ENCODE measurements at regions of chrX and their contacts with region 1.

Region 1: DNA sequence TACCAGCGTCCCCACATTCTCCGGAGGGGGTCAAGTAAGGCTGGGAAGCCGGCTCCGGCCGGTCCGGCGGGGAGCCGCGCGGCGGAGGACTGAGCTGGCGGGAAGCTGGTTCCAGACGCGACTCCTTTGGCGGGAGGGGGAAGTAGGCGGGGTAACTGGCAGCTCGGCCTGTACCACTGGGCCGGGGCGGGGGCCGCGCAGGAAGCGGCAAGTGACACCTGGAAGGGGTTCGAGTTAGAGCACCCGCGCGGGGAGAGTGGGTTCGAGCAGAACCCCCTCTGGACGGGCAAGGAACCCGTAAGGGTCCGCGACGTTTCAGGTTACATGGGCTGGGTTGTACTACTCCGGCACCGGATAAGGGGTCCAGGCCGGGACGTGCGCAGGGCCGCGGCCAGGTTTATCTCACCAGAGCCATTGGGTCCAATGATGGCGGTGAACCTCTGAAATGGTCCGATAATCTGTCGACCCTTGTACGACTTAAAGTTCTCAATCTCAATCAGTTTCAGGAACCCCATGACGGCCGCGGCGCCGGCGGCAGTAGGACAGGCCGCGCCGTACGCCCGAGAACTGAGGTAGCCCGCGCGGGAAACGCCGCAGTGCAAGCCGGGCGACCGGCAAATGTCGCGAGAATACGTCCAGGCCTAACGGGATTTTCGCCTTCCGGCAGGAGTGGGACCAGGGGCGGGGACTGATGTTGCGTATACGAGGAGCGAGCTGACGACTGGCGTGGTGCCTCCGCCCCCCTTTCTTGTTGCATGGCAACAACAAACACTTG is at the start of gene SMC1A:
- DNase-seq: peak; percentile 98
- H3K4me3 Mint-ChIP-seq: peak within 1 kb of the TSS; percentile 98
- H3K27ac Mint-ChIP-seq: peak within 1 kb of the TSS; percentile 98
- H3K4me1 Mint-ChIP-seq: peaks cover 24% of the 10 kb centered on the region
- H3K27me3 Mint-ChIP-seq: no peaks in the 10 kb centered on the region
- total RNA-seq, gene SMC1A: 141 and 144 TPM in 2 replicates

Region 2: DNA sequence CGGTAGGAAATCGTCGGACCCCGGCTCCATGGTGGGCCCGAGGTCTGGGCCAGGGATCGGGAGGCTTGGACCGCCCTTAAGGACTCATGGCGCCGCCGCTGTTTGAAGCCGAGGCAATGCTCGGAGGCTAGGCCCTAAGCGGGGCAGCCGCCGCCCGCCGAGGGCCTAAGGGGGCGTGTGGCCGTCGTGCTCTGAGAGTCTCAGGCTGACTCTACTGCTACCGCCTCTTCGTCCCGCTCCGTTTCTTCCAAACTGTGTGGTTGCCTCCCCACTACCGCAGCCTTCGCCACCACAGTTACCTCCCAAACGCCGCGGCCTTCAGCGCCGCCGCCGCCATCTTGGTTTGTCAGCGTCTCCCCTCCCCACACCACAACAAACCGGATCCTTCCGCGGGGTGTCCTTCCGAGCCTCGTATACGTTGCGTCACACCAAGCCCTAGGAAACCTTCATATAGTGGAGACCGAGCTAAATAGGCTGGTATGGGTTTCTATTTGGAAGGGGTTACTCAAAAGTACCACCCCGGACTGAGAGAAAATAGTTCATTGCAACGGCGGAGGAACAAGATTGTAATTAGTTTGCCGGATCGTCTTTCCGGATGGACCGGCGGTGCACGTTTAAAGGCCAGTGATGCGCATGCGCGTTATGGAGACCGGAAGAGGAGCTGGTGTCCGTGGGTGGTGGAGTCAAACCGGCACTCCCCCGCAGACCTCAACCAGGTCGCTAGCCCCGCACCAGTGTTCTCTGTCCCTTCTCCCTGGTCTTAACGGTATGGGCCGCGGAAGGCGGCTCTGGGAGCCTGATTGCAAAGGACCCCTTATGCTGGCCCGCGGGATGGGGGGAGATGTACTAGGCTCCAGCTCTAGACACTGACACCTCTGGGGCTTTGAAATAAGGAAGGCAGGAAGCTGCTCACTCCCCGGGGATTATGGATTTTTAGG is 197.1 kb before region 1 on chrX and contains the start of gene KDM5C:
- intact Hi-C with region 1: loop called (anchors 2 kb)
- DNase-seq: peak; percentile 95
- H3K4me3 Mint-ChIP-seq: peak within 1 kb of the TSS; percentile 97
- H3K27ac Mint-ChIP-seq: peak within 1 kb of the TSS; percentile 99
- H3K4me1 Mint-ChIP-seq: peaks cover 43% of the 10 kb centered on the region
- H3K27me3 Mint-ChIP-seq: no peaks in the 10 kb centered on the region
- total RNA-seq, gene KDM5C: 112 and 119 TPM in 2 replicates

Region 3: GRCh38 chrX:53347948-53348347 is 74.3 kb before region 1 on chrX:
- intact Hi-C with region 1: no loop called
- DNase-seq: no peak
- H3K4me3 Mint-ChIP-seq: no peak overlapping the region
- H3K27ac Mint-ChIP-seq: no peak overlapping the region
- H3K4me1 Mint-ChIP-seq: no peaks in the 10 kb centered on the region
- H3K27me3 Mint-ChIP-seq: no peaks in the 10 kb centered on the region

Region 4: DNA sequence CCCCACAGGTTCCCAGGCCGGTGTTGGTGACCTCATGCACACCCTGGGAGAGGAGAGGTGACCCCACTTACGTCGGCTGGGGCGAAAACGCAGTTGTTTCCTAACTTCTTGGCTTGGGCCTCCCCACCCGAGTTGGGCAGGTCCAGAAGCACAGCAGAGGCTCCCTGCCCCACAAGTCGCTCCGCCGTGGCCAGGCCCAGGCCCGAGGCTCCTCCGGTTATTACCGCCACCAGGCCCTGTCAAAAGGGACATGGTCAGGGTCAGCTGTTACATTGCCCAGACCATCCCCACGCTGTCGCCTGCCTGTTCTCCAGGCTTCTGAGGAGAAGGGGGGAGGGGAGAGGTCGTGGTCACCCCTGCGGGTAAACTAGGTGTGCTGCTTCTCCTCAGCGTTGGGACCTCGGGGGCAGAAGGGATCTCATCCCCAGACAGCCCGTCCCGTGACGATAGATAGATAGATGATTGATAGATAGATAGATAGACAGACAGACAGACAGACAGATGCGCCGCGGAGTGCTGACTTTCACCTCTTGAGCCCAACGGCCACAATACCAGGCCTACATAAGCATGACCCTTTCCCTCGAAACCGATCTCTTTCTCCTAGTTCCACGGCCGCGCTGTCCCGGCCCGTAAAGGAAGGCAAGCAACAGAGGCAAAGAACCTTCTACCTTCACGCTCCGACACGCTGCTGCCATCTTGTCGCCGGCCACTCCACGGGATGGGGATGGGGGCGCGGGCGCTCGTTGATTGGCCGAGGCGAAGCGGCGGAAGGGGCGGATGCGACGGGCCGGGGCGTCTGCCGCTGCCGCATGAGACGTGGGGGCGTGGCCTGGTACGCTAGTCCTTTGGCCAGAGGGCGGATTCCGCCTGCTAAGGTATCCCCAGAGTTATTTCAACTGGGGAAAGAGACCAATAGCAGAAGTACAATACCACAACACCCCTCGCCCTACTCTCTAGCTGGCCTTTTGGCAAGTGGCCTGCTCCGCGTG is 11.7 kb after region 1 on chrX and contains the start of gene HSD17B10:
- intact Hi-C with region 1: loop called (anchors 1 kb)
- DNase-seq: peak; percentile 96
- H3K4me3 Mint-ChIP-seq: peak within 1 kb of the TSS; percentile 98
- H3K27ac Mint-ChIP-seq: peak within 1 kb of the TSS; percentile 93
- H3K4me1 Mint-ChIP-seq: peaks cover 22% of the 10 kb centered on the region
- H3K27me3 Mint-ChIP-seq: no peaks in the 10 kb centered on the region
- total RNA-seq, gene HSD17B10: 148 and 165 TPM in 2 replicates

Region 5: DNA sequence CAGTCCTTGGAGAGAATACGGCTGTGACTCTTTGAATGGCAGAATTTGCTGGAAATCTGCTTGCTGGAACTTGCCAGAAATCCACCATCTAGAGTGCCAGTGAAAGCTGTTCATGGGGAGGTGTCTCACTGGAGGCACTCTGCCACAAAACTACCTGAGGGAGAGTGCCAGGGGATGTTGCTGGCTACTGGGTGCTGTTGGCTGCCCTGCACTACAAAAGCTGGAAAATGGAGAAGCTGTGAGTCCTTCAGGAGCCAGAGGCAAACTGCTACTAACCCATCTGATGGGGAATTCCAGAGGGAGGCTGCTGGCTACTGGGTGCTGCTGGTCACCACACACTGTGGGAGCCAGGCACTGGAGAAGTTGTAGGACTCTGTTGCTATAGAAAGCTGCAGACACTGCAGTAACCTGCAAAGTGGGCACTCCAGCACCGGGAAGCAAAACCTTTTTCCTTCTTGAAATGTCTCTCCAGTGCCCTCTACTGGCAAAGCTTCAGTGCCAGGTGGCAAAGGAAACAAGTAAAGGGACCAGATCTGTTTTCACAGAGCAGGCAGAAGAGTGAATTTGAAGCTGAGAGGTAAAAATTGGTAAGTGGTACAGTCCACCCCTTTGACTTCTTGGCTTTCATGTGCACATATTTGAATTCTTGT is 59.7 kb after region 1 on chrX:
- intact Hi-C with region 1: no loop called
- DNase-seq: peak; percentile 83
- H3K4me3 Mint-ChIP-seq: no peak overlapping the region
- H3K27ac Mint-ChIP-seq: no peak overlapping the region
- H3K4me1 Mint-ChIP-seq: no peaks in the 10 kb centered on the region
- H3K27me3 Mint-ChIP-seq: peaks cover 3% of the 10 kb centered on the region

Measured in activated CD4-positive, alpha-beta T cell treated with anti-CD3 and anti-CD28 coated beads, Interleukin-2, amount 10 ng/mL, durations not matched to agents 24 days and 14 days (primary cell).